WTC11 (cell line): ENCODE measurements at regions of chr1 and their contacts with region 1.

Region 1: GRCh38 chr1:201559679-201560162 is 20.8 kb downstream of the NAV1 start:
- DNase-seq: peak; percentile 86
- ATAC-seq: peak; percentile 96
- H3K4me3 Mint-ChIP-seq: no peak overlapping the region
- H3K27ac Mint-ChIP-seq: no peak overlapping the region
- H3K4me1 Mint-ChIP-seq: peaks cover 17% of the 10 kb centered on the region
- H3K27me3 Mint-ChIP-seq: peaks cover 9% of the 10 kb centered on the region
- CTCF ChIP-seq: peak; percentile 91

Region 2: GRCh38 chr1:201538612-201539551 is 20.8 kb before region 1 on chr1 and contains the start of gene NAV1:
- CTCF ChIA-PET with region 1: interaction called, 12 read pairs
- POLR2A ChIA-PET with region 1: no interaction called
- DNase-seq: peak; percentile 65
- ATAC-seq: peak; percentile 63
- H3K4me3 Mint-ChIP-seq: peak within 1 kb of the TSS; percentile 88
- H3K27ac Mint-ChIP-seq: no peak within 1 kb of the TSS
- H3K4me1 Mint-ChIP-seq: peaks cover 32% of the 10 kb centered on the region
- H3K27me3 Mint-ChIP-seq: peaks cover 64% of the 10 kb centered on the region
- CTCF ChIP-seq: no peak
- total RNA-seq, gene NAV1: 41.0 to 51.0 TPM (median 46.2 TPM) in 3 replicates

Region 3: DNA sequence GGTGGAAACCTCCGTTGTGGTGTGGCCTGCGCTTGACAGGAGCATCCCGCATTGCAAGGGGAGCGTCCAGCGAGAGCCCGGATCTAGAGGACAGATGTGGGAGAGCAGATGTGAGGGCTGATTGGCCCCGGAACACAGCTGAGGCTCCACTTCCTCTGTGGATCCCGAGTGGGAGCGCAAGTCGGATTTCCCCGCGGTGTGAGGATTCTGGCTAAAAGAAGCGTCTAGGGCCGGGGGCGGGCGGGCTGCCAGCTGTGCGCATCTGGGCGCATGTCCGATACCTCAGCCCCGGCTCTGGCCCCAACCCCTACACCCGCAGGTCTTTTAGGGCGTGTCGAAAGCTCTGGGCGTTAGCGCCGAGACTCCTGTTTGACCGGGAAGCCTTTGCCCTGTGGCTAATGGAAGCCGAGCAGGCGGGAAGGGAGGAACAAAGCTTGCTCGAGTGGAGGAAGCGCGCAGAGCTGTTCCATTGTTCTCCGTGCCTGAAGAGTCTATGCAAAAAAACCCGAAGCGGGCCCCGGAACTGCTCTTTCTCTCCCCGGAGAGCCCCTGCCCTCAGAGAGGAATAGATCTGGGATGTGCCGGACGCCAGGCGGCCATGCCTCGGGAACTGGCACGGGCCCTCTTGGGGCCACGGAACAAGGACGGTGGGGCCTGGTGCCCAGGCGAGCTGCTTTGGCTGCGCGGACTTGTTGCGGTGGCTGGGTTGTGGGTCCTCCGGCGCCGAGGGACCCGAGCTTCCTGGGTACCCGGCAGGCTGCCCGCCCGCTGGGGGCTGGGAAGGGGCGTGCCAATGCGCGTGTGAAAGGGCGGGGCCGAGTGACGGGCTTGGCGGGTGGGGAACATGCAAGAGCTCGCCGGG is 90.3 kb after region 1 on chr1:
- CTCF ChIA-PET with region 1: interaction called, 45 read pairs
- POLR2A ChIA-PET with region 1: no interaction called
- DNase-seq: peak; percentile 92
- ATAC-seq: peak; percentile 46
- H3K4me3 Mint-ChIP-seq: peak overlapping the region; percentile 79
- H3K27ac Mint-ChIP-seq: peak overlapping the region; percentile 82; the same call in 1 of the 2 replicates
- H3K4me1 Mint-ChIP-seq: peaks cover 55% of the 10 kb centered on the region
- H3K27me3 Mint-ChIP-seq: peaks cover 17% of the 10 kb centered on the region
- CTCF ChIP-seq: no peak

Region 4: DNA sequence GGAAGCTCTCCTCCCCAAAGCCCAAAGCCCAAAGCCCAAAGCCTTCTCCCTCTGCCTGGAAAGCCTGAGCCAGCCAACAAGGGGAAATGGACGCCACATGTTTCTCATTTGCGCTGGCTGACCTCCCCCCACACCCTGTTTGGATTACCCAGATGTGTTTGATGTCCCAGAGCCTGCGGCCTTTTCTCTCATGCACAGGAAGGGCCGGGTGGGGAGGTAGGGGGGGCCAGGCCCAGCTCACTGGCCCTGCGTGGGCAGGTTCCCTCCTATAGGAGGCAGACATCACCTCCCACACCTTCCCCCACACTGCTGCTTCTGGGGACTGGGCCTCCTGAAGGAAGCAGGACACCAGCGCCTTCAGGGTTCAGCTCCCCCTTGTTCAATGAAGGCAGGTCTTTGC is 95.5 kb after region 1 on chr1:
- CTCF ChIA-PET with region 1: interaction called, 45 read pairs
- POLR2A ChIA-PET with region 1: no interaction called
- DNase-seq: peak; percentile 42
- ATAC-seq: peak; percentile 58
- H3K4me3 Mint-ChIP-seq: no peak overlapping the region
- H3K27ac Mint-ChIP-seq: no peak overlapping the region
- H3K4me1 Mint-ChIP-seq: peaks cover 52% of the 10 kb centered on the region
- H3K27me3 Mint-ChIP-seq: peaks cover 4% of the 10 kb centered on the region
- CTCF ChIP-seq: no peak

Region 5: GRCh38 chr1:201676197-201676596 is 116.5 kb after region 1 on chr1:
- CTCF ChIA-PET with region 1: interaction called, 12 read pairs
- POLR2A ChIA-PET with region 1: no interaction called
- DNase-seq: peak; percentile 50
- ATAC-seq: peak; percentile 66
- H3K4me3 Mint-ChIP-seq: peak overlapping the region; percentile 14; the same call in 1 of the 2 replicates
- H3K27ac Mint-ChIP-seq: peak overlapping the region; percentile 84
- H3K4me1 Mint-ChIP-seq: peaks cover 66% of the 10 kb centered on the region
- H3K27me3 Mint-ChIP-seq: no peaks in the 10 kb centered on the region
- CTCF ChIP-seq: no peak

Region 6: DNA sequence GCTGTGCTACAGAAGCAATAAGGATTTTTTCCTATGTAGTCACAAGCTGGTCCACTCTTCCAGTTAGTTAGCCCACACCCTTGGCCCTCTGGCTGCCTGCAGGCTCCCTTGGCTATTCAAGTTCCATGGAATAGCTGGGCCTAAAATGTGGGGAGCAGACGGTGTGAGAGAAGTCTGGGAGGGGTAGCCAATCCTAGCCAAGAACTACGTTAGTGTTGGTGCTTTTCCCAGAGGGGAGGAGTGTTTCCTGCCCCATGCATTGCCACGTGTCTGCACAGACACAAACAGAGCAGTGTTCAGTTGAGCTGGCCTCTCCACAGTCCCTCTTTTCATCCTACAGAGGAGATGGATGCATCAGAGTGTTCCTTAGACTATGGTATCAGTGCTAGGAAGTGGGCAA is 210.2 kb after region 1 on chr1:
- CTCF ChIA-PET with region 1: no interaction called
- POLR2A ChIA-PET with region 1: no interaction called
- DNase-seq: no peak
- ATAC-seq: no peak
- H3K4me3 Mint-ChIP-seq: no peak overlapping the region
- H3K27ac Mint-ChIP-seq: no peak overlapping the region
- H3K4me1 Mint-ChIP-seq: 0 out of 2 replicates have a peak, but pooled peaks cover 3% of the 10 kb centered on the region
- H3K27me3 Mint-ChIP-seq: no peaks in the 10 kb centered on the region
- CTCF ChIP-seq: no peak